ENCODE measurements at regions of chr6 and their contacts with region 1.

Region 1: GRCh38 chr6:127539272-127539671 is 20.1 kb upstream of the MTCL3 start:
- DNase-seq: no peak
- ATAC-seq: peak; percentile 76
- H3K4me3 Mint-ChIP-seq: no peak overlapping the region
- H3K27ac Mint-ChIP-seq: no peak overlapping the region
- H3K4me1 Mint-ChIP-seq: no peaks in the 10 kb centered on the region
- H3K27me3 Mint-ChIP-seq: peaks cover 12% of the 10 kb centered on the region
- CTCF ChIP-seq: peak; percentile 61

Region 2: GRCh38 chr6:127459231-127459641 is 80.0 kb before region 1 on chr6 and contains the start of gene KIAA0408:
- CTCF ChIA-PET with region 1: interaction called, 34 read pairs
- POLR2A ChIA-PET with region 1: no interaction called
- intact Hi-C with region 1: no loop called
- DNase-seq: no peak
- ATAC-seq: no peak
- H3K4me3 Mint-ChIP-seq: no peak within 1 kb of the TSS
- H3K27ac Mint-ChIP-seq: no peak within 1 kb of the TSS
- H3K4me1 Mint-ChIP-seq: no peaks in the 10 kb centered on the region
- H3K27me3 Mint-ChIP-seq: peaks cover 2% of the 10 kb centered on the region
- CTCF ChIP-seq: no peak
- total RNA-seq, gene KIAA0408: 1.8 to 2.6 TPM

Region 3: DNA sequence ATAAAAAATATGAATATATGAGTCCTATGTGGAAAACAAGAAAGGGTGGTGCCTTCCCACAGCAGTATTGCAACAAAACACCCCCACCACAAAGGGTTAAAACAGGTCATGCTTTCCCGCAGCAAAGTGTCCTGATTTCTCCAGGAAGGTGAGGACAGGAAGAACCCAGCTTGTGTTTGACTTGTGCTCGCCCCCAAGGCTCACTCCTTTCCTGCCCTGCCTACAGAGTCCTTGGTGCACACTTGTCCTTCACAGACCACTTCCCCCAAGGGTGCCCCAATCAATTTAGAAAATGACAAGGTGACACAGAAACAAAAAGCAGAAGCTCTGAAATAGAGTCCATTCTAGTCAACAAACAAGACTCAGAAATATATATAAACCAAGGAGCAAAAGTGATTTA is 743.7 kb after region 1 on chr6:
- CTCF ChIA-PET with region 1: no interaction called
- POLR2A ChIA-PET with region 1: no interaction called
- intact Hi-C with region 1: no loop called
- DNase-seq: no peak
- ATAC-seq: no peak
- H3K4me3 Mint-ChIP-seq: no peak overlapping the region
- H3K27ac Mint-ChIP-seq: no peak overlapping the region
- H3K4me1 Mint-ChIP-seq: peaks cover 7% of the 10 kb centered on the region
- H3K27me3 Mint-ChIP-seq: no peaks in the 10 kb centered on the region
- CTCF ChIP-seq: no peak